ENCODE measurements at regions of chr3 and their contacts with region 1.

Region 1: DNA sequence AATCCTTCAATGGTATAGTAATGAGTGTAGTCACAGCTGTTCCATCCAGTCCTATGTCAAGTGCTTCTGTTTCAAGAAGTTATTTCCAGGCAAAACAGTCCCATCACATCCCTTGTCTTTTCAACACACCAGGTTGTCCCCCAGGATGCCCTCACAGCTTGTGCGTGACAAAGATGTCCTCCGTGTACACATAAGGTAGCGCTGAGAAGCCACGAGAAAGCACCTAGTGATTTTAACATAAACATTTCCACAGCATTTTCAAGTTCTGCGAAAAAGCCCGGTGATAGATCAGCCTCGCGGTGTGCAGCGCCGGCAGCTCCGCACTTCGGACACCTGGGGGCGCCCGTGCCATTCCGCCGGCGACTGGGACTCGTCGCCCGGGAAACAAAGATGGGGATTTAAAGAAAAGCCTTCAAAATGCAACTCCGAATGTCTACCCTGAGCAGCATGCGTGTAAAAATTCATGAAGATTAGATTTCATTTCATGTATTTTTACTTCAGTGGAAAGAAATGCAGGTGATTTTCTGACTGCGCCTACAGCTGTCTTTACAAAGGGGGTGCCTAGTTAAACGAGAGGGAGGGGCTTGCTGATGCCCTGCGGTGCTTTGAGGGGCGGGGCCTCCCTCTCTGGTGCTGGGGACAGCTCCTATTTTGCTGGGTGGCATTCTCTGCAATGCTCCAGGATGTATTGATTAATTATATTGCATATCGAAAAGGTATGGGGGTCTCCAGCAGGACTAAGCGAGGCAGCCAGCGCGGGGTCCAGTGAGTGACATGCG is 49.9 kb downstream of the KY start:
- DNase-seq: peak; percentile 62
- ATAC-seq: peak; percentile 93
- H3K4me3 Mint-ChIP-seq: no peak overlapping the region
- H3K27ac Mint-ChIP-seq: no peak overlapping the region
- H3K4me1 Mint-ChIP-seq: peaks cover 9% of the 10 kb centered on the region
- H3K27me3 Mint-ChIP-seq: peaks cover 5% of the 10 kb centered on the region
- CTCF ChIP-seq: peak; percentile 98

Region 2: GRCh38 chr3:134590766-134591165 is 10.1 kb before region 1 on chr3:
- CTCF ChIA-PET with region 1: interaction called, 15 read pairs
- POLR2A ChIA-PET with region 1: no interaction called
- intact Hi-C with region 1: no loop called
- DNase-seq: no peak
- ATAC-seq: no peak
- H3K4me3 Mint-ChIP-seq: no peak overlapping the region
- H3K27ac Mint-ChIP-seq: no peak overlapping the region
- H3K4me1 Mint-ChIP-seq: no peaks in the 10 kb centered on the region
- H3K27me3 Mint-ChIP-seq: peaks cover 2% of the 10 kb centered on the region
- CTCF ChIP-seq: no peak

Region 3: GRCh38 chr3:134614955-134615354 is 14.1 kb after region 1 on chr3:
- CTCF ChIA-PET with region 1: interaction called, 14 read pairs
- POLR2A ChIA-PET with region 1: no interaction called
- intact Hi-C with region 1: no loop called
- DNase-seq: no peak
- ATAC-seq: no peak
- H3K4me3 Mint-ChIP-seq: no peak overlapping the region
- H3K27ac Mint-ChIP-seq: no peak overlapping the region
- H3K4me1 Mint-ChIP-seq: no peaks in the 10 kb centered on the region
- H3K27me3 Mint-ChIP-seq: no peaks in the 10 kb centered on the region
- CTCF ChIP-seq: no peak

Region 4: GRCh38 chr3:134640872-134641470 is 40.1 kb after region 1 on chr3:
- CTCF ChIA-PET with region 1: interaction called, 13 read pairs
- POLR2A ChIA-PET with region 1: no interaction called
- intact Hi-C with region 1: no loop called
- DNase-seq: peak; percentile 37
- ATAC-seq: peak; percentile 51
- H3K4me3 Mint-ChIP-seq: no peak overlapping the region
- H3K27ac Mint-ChIP-seq: no peak overlapping the region
- H3K4me1 Mint-ChIP-seq: no peaks in the 10 kb centered on the region
- H3K27me3 Mint-ChIP-seq: peaks cover 2% of the 10 kb centered on the region
- CTCF ChIP-seq: no peak

Region 5: GRCh38 chr3:134754768-134755559 is 154.1 kb after region 1 on chr3:
- CTCF ChIA-PET with region 1: interaction called, 37 read pairs
- POLR2A ChIA-PET with region 1: no interaction called
- intact Hi-C with region 1: loop called (anchors 5 kb)
- DNase-seq: peak; percentile 61
- ATAC-seq: peak; percentile 80
- H3K4me3 Mint-ChIP-seq: no peak overlapping the region
- H3K27ac Mint-ChIP-seq: no peak overlapping the region
- H3K4me1 Mint-ChIP-seq: no peaks in the 10 kb centered on the region
- H3K27me3 Mint-ChIP-seq: no peaks in the 10 kb centered on the region
- CTCF ChIP-seq: peak; percentile 57

Region 6: GRCh38 chr3:135895106-135895733 is 1294.3 kb after region 1 on chr3:
- CTCF ChIA-PET with region 1: interaction called, 5 read pairs
- POLR2A ChIA-PET with region 1: no interaction called
- intact Hi-C with region 1: loop called (anchors 10 kb)
- DNase-seq: peak; percentile 69
- ATAC-seq: no peak
- H3K4me3 Mint-ChIP-seq: no peak overlapping the region
- H3K27ac Mint-ChIP-seq: no peak overlapping the region
- H3K4me1 Mint-ChIP-seq: no peaks in the 10 kb centered on the region
- H3K27me3 Mint-ChIP-seq: no peaks in the 10 kb centered on the region
- CTCF ChIP-seq: peak; percentile 70

Measured in activated CD8-positive, alpha-beta T cell treated with anti-CD3 and anti-CD28 coated beads for 36 hours (primary cell).